ENCODE measurements at regions of chr1 and their contacts with region 1.

Region 1: GRCh38 chr1:94061513-94062443 is 59.2 kb downstream of the ABCA4 start:
- DNase-seq: peak; percentile 51 to 70 (median 57)
- H3K4me3 ChIP-seq: no peak overlapping the region
- H3K27ac ChIP-seq: no peak overlapping the region
- H3K4me1 ChIP-seq: peaks cover 9% of the 10 kb centered on the region
- H3K27me3 ChIP-seq: no peaks in the 10 kb centered on the region
- CTCF ChIP-seq: peak; percentile 18 to 78 (median 74)
- EP300 ChIP-seq: no peak
- POLR2A ChIP-seq: no peak

Region 2: GRCh38 chr1:93980320-93981273 is 81.2 kb before region 1 on chr1:
- intact Hi-C with region 1: no loop called
- DNase-seq: no peak
- H3K4me3 ChIP-seq: no peak overlapping the region
- H3K27ac ChIP-seq: peak overlapping the region in 1 of 2 donors; percentile 30
- H3K4me1 ChIP-seq: peaks cover 7% of the 10 kb centered on the region
- H3K27me3 ChIP-seq: no peaks in the 10 kb centered on the region
- CTCF ChIP-seq: peak in 1 of 3 donors; percentile 6
- EP300 ChIP-seq: no peak
- POLR2A ChIP-seq: no peak

Region 3: DNA sequence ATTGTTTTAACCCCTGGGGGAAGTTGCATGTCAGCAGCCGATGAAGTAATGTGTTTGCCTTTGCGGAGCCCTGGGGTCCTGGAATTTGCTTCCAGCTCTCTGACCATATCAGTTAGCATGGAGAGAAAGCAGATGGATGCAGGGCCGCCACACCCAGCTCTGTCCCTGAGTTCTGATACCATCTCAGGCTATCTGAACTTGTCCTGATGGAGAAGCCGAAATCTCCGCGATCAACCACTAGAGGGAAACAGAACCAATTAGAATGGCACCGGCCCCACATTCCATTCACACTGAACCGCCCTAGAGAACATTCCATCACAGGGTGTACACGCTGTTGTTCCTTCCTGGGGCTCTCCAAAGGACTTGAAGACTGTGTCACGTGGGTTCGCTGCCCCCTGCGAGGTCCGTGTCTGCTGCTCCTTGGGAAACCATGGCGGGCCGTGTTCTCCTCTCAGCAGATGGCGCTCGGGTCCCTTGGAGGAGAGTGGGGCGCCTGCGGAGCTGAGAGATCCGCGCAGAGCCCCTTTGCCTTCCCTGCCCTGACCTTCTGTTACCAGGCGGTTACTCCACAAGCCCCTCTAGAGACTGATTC is 16.2 kb before region 1 on chr1:
- intact Hi-C with region 1: loop called in 1 of 4 experiments (anchors 2 kb)
- DNase-seq: peak; percentile 80 to 88 (median 85)
- H3K4me3 ChIP-seq: peak overlapping the region; percentile 11
- H3K27ac ChIP-seq: peak overlapping the region in 1 of 2 donors; percentile 26
- H3K4me1 ChIP-seq: peaks cover 2% of the 10 kb centered on the region
- H3K27me3 ChIP-seq: no peaks in the 10 kb centered on the region
- CTCF ChIP-seq: peak; percentile 70 to 90 (median 75)
- EP300 ChIP-seq: no peak
- POLR2A ChIP-seq: no peak

Region 4: GRCh38 chr1:94095112-94095637 is 33.4 kb after region 1 on chr1:
- intact Hi-C with region 1: loop called in 2 of 4 experiments (anchors 5 kb)
- DNase-seq: peak; percentile 84 to 91 (median 87)
- H3K4me3 ChIP-seq: no peak overlapping the region
- H3K27ac ChIP-seq: peak overlapping the region; percentile 26 to 78
- H3K4me1 ChIP-seq: peaks cover 39% of the 10 kb centered on the region
- H3K27me3 ChIP-seq: no peaks in the 10 kb centered on the region
- CTCF ChIP-seq: no peak
- EP300 ChIP-seq: no peak
- POLR2A ChIP-seq: no peak

Region 5: GRCh38 chr1:94237291-94238226 is 175.8 kb after region 1 on chr1 and contains the start of gene ARHGAP29:
- intact Hi-C with region 1: loop called in 1 of 4 experiments (anchors 5 kb)
- DNase-seq: peak; percentile 78 to 89 (median 81)
- H3K4me3 ChIP-seq: peak within 1 kb of the TSS; percentile 69
- H3K27ac ChIP-seq: peak within 1 kb of the TSS; percentile 19 to 40
- H3K4me1 ChIP-seq: no peaks in the 10 kb centered on the region
- H3K27me3 ChIP-seq: no peaks in the 10 kb centered on the region
- CTCF ChIP-seq: no peak
- EP300 ChIP-seq: no peak
- POLR2A ChIP-seq: peak; percentile 55
- total RNA-seq, gene ARHGAP29: 13.3 to 51.0 (median 20.5) TPM

Region 6: DNA sequence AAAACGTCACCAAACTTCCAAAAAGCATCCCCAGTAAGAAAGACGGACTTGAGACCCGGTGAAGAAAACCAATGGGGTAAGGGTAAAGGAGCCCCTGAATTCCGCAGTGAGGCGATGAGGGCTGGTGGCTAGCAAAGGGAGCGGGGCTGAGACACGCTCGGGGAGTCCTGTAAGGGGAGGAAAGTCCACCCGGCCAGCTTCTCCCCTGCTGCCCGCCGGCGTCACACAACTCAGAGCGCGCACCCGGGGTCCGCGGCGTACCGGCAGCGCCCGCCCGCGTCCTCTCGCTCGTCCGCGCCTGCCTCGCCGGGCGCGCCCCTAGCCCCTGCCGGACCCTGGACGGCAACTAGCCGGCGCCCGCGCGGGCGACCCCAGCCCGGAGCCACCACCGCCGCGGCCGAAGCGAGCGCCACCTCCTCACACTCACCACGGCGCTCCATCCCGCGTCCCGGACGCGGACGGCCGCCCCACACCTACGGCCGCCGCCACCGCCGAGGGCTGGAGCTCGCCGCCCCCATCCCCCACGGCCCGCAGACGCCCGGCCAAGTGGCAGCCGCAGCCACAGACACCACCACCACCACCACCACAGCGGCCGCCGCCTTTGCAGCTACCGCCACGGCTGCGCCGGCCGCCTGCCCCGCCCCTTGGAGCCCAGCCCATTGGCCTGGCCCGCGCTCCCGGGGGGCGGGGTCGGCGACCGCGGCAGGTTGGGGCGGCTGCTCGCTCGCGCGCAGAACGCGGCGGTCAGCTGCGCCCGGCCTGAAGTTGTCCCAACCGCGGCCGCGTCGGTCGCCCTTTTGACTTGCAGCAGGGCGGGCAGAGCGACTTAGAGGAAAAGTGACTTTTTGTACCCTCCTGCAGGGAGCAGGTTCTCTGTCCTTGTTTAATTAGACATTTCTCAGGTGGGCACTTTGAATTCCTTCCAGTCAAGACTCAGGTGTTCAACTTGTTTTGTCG is 185.6 kb after region 1 on chr1:
- intact Hi-C with region 1: loop called in 1 of 4 experiments (anchors 5 kb)
- DNase-seq: peak; percentile 66 to 82 (median 71)
- H3K4me3 ChIP-seq: peak overlapping the region; percentile 49
- H3K27ac ChIP-seq: peak overlapping the region; percentile 23 to 60
- H3K4me1 ChIP-seq: peaks cover 5% of the 10 kb centered on the region
- H3K27me3 ChIP-seq: no peaks in the 10 kb centered on the region
- CTCF ChIP-seq: no peak
- EP300 ChIP-seq: no peak
- POLR2A ChIP-seq: peak; percentile 41

Region 7: DNA sequence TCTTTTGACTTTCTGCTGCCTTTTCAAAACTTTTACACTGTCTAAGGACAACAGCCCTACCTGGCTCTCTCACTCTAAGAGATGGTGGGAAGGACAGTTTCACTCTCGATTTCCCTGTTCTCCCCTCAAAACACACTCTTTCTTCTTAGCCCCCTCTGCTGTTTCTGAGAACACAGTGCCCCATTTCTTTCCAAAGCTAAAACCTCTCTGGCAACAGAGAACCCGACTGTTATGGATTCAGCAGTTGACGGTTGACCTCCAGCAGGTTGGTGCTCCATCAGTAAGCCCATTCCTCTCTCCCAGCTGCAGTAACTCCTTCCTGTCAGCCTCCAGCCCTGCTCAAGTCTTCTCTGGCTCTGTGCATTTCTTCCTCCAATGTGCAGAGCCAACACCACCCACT is 268.2 kb after region 1 on chr1:
- intact Hi-C with region 1: loop called in 3 of 4 experiments (anchors 2 to 5 kb)
- DNase-seq: no peak
- H3K4me3 ChIP-seq: no peak overlapping the region
- H3K27ac ChIP-seq: no peak overlapping the region
- H3K4me1 ChIP-seq: peaks cover 5% of the 10 kb centered on the region
- H3K27me3 ChIP-seq: no peaks in the 10 kb centered on the region
- CTCF ChIP-seq: peak in 1 of 3 donors; percentile 12
- EP300 ChIP-seq: no peak
- POLR2A ChIP-seq: no peak

Region 8: DNA sequence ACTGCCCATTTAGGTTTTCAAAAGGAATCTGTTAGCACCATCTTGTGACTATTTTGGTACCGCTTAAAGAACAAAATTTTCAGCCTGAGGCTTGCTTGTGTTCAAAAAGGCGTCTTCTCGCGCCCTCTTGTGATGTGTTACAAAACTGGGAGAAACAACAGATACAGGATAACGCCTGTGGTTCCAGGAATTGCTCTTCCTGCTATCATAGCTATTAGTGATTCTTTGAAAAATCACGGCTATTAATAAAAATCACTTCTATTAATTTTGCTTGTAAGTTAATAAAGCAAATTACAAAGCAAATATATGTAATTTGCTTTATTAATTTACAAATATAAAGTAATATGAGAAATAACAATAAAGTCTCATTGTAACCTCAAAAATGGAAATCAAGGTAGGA is 274.2 kb after region 1 on chr1:
- intact Hi-C with region 1: loop called in 3 of 4 experiments (anchors 2 to 5 kb)
- DNase-seq: peak; percentile 60 to 84 (median 73)
- H3K4me3 ChIP-seq: no peak overlapping the region
- H3K27ac ChIP-seq: no peak overlapping the region
- H3K4me1 ChIP-seq: no peaks in the 10 kb centered on the region
- H3K27me3 ChIP-seq: no peaks in the 10 kb centered on the region
- CTCF ChIP-seq: peak; percentile 46 to 96 (median 94)
- EP300 ChIP-seq: no peak
- POLR2A ChIP-seq: no peak